GM12878 (cell line): ENCODE measurements at regions of chr12 and their contacts with region 1.

Region 1: DNA sequence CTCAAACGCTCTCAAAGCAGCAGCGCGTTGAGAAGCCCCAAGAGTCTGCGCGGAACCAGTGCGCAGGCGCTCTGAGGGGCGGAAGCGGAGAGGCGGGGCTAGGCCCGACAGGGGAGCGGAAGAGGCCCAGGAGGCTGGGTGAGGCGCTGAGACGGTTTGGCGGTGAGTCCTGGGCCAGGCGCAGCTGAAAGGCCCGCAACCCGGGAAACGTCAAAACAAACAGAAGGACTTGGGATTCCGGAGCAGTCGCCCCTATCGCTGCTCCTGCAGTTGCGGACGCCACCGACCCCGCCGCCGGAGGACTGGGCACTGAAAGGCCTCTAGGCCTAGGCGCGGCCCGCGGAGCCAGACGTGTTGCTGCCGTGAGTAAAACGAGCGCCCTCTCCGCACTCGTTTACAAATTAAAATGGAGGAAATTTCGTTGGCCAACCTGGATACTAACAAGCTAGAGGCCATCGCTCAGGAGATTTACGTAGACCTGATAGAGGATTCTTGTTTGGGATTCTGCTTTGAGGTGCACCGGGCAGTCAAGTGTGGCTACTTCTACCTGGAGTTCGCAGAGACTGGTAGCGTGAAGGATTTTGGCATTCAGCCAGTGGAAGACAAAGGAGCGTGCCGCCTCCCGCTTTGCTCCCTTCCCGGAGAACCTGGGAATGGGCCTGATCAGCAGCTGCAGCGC is at the start of gene ATXN7L3B:
- DNase-seq: peak; percentile 73
- ATAC-seq: peak; percentile 95
- H3K4me3 ChIP-seq: peak within 1 kb of the TSS; percentile 83
- H3K27ac ChIP-seq: peak within 1 kb of the TSS; percentile 90
- H3K4me1 ChIP-seq: peaks cover 5% of the 10 kb centered on the region; the same call in 1 of the 2 replicates
- H3K27me3 ChIP-seq: no peaks in the 10 kb centered on the region
- CTCF ChIP-seq: 0 out of 6 replicates have a peak, but pooled peaks of 1 of the 3 experiments have one; percentile 6
- EP300 ChIP-seq: no peak
- POLR2A ChIP-seq: peak; percentile 95
- RAD21 ChIP-seq: no peak
- polyA plus RNA-seq, gene ATXN7L3B: 6.3 to 6.9 TPM

Region 2: GRCh38 chr12:74021937-74022336 is 515.9 kb before region 1 on chr12:
- CTCF ChIA-PET with region 1: interaction called, 6 read pairs
- POLR2A ChIA-PET with region 1: no interaction called
- RAD21 ChIA-PET with region 1: no interaction called
- SMC1A ChIA-PET with region 1: no interaction called
- in situ Hi-C with region 1: no loop called
- intact Hi-C with region 1: loop called (anchors 5 kb)
- DNase-seq: no peak
- ATAC-seq: peak; percentile 99
- H3K4me3 ChIP-seq: no peak overlapping the region
- H3K27ac ChIP-seq: no peak overlapping the region
- H3K4me1 ChIP-seq: no peaks in the 10 kb centered on the region
- H3K27me3 ChIP-seq: no peaks in the 10 kb centered on the region
- CTCF ChIP-seq: peak; percentile 60 to 72 (median 72)
- EP300 ChIP-seq: no peak
- POLR2A ChIP-seq: no peak
- RAD21 ChIP-seq: peak; percentile 49

Region 3: DNA sequence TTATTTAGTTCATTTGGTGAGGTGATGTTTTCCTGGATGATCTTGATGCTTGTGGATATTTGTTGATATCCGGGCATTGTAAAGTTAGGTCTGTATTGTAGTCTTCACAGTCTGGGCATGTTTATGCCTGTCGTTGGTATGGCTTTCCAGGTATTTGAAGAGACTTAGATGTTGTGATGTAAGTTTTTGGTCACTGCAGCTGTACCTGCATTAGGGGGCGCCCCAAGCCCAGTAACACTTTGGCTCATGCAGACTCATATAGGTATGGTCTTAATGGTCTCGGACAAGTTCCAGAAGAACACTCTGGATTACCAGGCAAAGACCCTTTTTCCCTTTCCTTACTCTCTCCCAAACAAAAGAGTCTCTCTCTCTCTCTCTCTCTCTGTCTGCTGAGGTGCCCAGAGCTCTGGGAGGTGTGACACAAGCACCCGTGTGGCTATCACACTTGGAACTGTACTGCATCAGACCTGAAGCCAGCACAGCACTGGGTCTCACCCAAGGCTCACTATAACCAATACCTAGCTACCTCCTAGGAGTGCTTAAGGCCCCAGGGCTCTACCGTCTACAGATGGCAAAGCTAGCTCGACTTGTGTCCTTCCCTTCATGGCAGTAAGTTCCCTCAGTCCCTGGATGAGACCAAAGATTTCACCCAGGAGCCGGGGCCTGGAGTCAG is 426.0 kb before region 1 on chr12:
- CTCF ChIA-PET with region 1: no interaction called
- POLR2A ChIA-PET with region 1: no interaction called
- RAD21 ChIA-PET with region 1: no interaction called
- SMC1A ChIA-PET with region 1: interaction called, 3 read pairs
- in situ Hi-C with region 1: no loop called
- intact Hi-C with region 1: loop called (anchors 5 kb)
- DNase-seq: no peak
- ATAC-seq: peak; percentile 89
- H3K4me3 ChIP-seq: no peak overlapping the region
- H3K27ac ChIP-seq: no peak overlapping the region
- H3K4me1 ChIP-seq: no peaks in the 10 kb centered on the region
- H3K27me3 ChIP-seq: no peaks in the 10 kb centered on the region
- CTCF ChIP-seq: peak in 2 of 3 experiments; percentile 24 to 52; a peak in 3 of 6 replicates
- EP300 ChIP-seq: no peak
- POLR2A ChIP-seq: no peak
- RAD21 ChIP-seq: peak; percentile 55

Region 4: DNA sequence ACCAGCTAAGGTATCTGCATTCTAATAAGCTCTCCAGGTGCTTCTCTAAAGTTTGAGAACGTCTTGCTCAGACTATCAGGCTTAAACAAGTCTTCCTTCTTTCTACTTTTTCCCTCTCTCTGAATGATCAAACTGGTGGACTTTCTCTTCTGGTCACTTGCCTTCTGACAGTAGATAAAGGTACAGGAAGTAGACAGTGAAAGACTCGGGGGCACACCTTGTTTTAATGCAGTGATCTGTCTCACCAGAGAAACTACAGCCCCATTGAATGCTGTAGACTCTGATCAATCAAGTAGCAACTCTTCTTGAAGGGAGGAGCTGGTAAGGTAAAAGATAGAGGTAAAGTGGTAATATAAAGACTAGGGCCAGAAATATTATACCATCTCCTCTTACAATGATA is 48.3 kb before region 1 on chr12:
- CTCF ChIA-PET with region 1: interaction called, 4 read pairs
- POLR2A ChIA-PET with region 1: interaction called, 3 read pairs
- RAD21 ChIA-PET with region 1: interaction called, 3 read pairs
- SMC1A ChIA-PET with region 1: interaction called, 4 read pairs
- in situ Hi-C with region 1: no loop called
- intact Hi-C with region 1: loop called (anchors 1 kb)
- DNase-seq: no peak
- ATAC-seq: peak; percentile 69
- H3K4me3 ChIP-seq: no peak overlapping the region
- H3K27ac ChIP-seq: no peak overlapping the region
- H3K4me1 ChIP-seq: 0 out of 2 replicates have a peak, but pooled peaks cover 2% of the 10 kb centered on the region
- H3K27me3 ChIP-seq: no peaks in the 10 kb centered on the region
- CTCF ChIP-seq: no peak
- EP300 ChIP-seq: no peak
- POLR2A ChIP-seq: no peak
- RAD21 ChIP-seq: no peak